Stomach (tissue), 19 donors: ENCODE measurements at regions of chr1 and their contacts with region 1.

Region 1: GRCh38 chr1:37978541-37978940 is 11.3 kb downstream of the SF3A3 start:
- DNase-seq: no peak
- H3K4me3 ChIP-seq: no peak overlapping the region
- H3K27ac ChIP-seq: no peak overlapping the region
- H3K4me1 ChIP-seq: no peaks in the 10 kb centered on the region
- H3K27me3 ChIP-seq: no peaks in the 10 kb centered on the region
- CTCF ChIP-seq: no peak
- EP300 ChIP-seq: no peak
- POLR2A ChIP-seq: no peak

Region 2: GRCh38 chr1:37795321-37796125 is 183.0 kb before region 1 on chr1:
- intact Hi-C with region 1: no loop called
- DNase-seq: peak; percentile 68 to 88
- H3K4me3 ChIP-seq: peak overlapping the region in 3 of 4 donors; percentile 55 to 74 (median 74)
- H3K27ac ChIP-seq: no peak overlapping the region
- H3K4me1 ChIP-seq: peaks cover 15 to 25% (median 23%) of the 10 kb centered on the region in 4 donors
- H3K27me3 ChIP-seq: peaks cover 0 to 39% (median 0%) of the 10 kb centered on the region in 3 donors
- CTCF ChIP-seq: no peak
- EP300 ChIP-seq: no peak
- POLR2A ChIP-seq: no peak

Region 3: DNA sequence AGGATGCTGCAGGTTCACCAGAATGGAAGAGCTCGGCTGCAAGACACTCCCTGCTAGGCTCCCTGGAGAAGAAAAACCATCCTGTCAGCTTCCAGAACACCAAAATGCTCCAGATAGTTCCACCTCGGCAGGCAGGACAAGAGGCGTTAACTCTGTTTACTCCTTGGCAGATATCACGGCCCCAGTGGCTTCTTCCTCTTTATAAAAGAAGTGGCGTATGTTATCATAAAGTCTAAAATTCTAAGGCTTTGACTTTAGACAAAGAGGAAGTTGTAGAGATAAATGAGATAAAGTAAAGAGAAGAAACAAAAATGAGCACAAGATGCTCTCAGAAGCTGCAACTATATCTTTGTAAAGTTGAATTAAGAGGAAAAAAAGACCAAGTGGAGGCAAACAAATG is 94.9 kb before region 1 on chr1:
- intact Hi-C with region 1: loop called (anchors 10 kb)
- DNase-seq: no peak
- H3K4me3 ChIP-seq: no peak overlapping the region
- H3K27ac ChIP-seq: no peak overlapping the region
- H3K4me1 ChIP-seq: peaks cover 0 to 2% (median under 1%) of the 10 kb centered on the region in 4 donors
- H3K27me3 ChIP-seq: no peaks in the 10 kb centered on the region
- CTCF ChIP-seq: no peak
- EP300 ChIP-seq: no peak
- POLR2A ChIP-seq: no peak